ENCODE measurements at regions of chr7 and their contacts with region 1.

Region 1: DNA sequence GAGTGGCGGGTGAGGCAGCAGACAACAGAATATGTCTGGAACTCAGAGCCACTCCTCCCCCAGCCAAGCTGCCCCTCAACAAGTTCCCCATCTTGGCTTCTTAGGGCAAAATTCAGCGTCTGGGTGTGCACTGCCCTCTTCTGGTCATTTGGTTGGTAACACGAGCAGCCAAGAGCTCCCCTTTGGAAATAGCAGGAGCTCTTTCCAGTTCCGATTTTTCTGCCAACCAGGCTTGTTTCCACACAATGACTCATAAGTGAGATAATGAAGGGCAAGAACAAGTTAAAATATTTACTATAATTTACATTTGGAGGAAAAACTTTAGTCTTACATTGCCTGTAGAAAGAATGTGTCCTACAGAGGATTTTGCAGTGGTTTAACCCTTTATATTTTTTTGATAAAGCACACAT is 70.5 kb downstream of the ADCYAP1R1 start:
- DNase-seq: peak in 3 of 4 donors; percentile 62 to 86 (median 70)
- ATAC-seq: peak; percentile 95
- H3K4me3 ChIP-seq: no peak overlapping the region
- H3K27ac ChIP-seq: no peak overlapping the region
- H3K4me1 ChIP-seq: peaks cover 0 to 8% of the 10 kb centered on the region in 2 donors
- H3K27me3 ChIP-seq: no peaks in the 10 kb centered on the region
- CTCF ChIP-seq: peak; percentile 78 to 81

Region 2: GRCh38 chr7:30800785-30801252 is 321.8 kb before region 1 on chr7:
- intact Hi-C with region 1: loop called in 1 of 2 experiments (anchors 10 kb)
- DNase-seq: peak in 2 of 4 donors; percentile 67 to 79
- ATAC-seq: peak; percentile 86
- H3K4me3 ChIP-seq: no peak overlapping the region
- H3K27ac ChIP-seq: no peak overlapping the region
- H3K4me1 ChIP-seq: peaks cover 23 to 33% of the 10 kb centered on the region in 2 donors
- H3K27me3 ChIP-seq: no peaks in the 10 kb centered on the region
- CTCF ChIP-seq: peak; percentile 59 to 66

Region 3: GRCh38 chr7:30983042-30983913 is 139.4 kb before region 1 on chr7:
- intact Hi-C with region 1: loop called (anchors 5 to 10 kb)
- DNase-seq: peak; percentile 73 to 91 (median 82)
- ATAC-seq: peak; percentile 94
- H3K4me3 ChIP-seq: no peak overlapping the region
- H3K27ac ChIP-seq: no peak overlapping the region
- H3K4me1 ChIP-seq: peaks cover 2 to 5% of the 10 kb centered on the region in 2 donors
- H3K27me3 ChIP-seq: peaks cover 0 to 16% of the 10 kb centered on the region in 2 donors
- CTCF ChIP-seq: peak; percentile 85 to 93